PC-9 (cell line): ENCODE measurements at regions of chr4 and their contacts with region 1.

Region 1: DNA sequence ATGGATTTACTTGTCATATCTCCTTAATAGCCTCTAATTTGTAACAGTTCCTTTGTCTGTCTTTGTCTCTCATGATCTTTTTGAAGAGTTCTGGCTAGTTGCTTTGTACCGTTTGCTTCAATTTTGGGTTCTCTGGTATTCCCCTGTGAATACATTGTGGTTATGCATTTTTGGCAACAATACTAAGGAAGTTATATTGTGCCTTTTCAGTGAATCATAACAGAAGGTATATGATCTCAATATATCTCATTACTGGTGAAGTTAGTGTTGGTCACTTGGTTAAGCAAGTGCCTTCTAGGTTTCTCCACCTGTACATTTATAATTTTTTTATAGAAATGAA is 48.6 kb downstream of the DCLK2 start:
- DNase-seq: peak in 1 of 2 experiments; percentile 62
- H3K4me3 ChIP-seq: no peak overlapping the region
- H3K27ac ChIP-seq: peak overlapping the region; percentile 27; the same call in 1 of the 2 replicates
- H3K4me1 ChIP-seq: peaks cover 15% of the 10 kb centered on the region; the same call in 1 of the 2 replicates
- H3K27me3 ChIP-seq: no peaks in the 10 kb centered on the region
- CTCF ChIP-seq: no peak

Region 2: DNA sequence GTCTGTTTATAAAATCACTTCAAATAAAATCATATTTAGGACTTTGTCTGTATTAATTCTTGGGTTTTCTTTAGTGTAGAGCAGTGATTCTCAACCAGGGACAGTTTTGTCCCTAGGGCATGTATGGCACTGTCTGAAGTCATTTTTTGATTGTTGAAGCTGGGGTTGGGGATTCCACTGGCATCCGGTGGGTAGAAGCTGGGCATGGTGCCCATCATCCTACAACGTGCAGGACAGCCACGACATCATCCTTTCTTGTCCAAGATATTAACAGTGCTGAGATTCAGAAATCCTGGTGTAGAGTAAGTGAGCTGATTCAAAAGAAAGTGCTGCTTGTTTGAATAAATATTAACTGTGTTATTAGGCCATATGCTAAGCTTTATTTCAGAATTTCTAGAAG is 19.9 kb before region 1 on chr4:
- CTCF ChIA-PET with region 1: interaction called, 10 read pairs
- POLR2A ChIA-PET with region 1: no interaction called
- intact Hi-C with region 1: no loop called
- DNase-seq: no peak
- H3K4me3 ChIP-seq: no peak overlapping the region
- H3K27ac ChIP-seq: no peak overlapping the region
- H3K4me1 ChIP-seq: no peaks in the 10 kb centered on the region
- H3K27me3 ChIP-seq: no peaks in the 10 kb centered on the region
- CTCF ChIP-seq: no peak

Region 3: GRCh38 chr4:150149381-150149780 is 22.5 kb after region 1 on chr4:
- CTCF ChIA-PET with region 1: no interaction called
- POLR2A ChIA-PET with region 1: no interaction called
- intact Hi-C with region 1: no loop called
- DNase-seq: no peak
- H3K4me3 ChIP-seq: no peak overlapping the region
- H3K27ac ChIP-seq: no peak overlapping the region
- H3K4me1 ChIP-seq: no peaks in the 10 kb centered on the region
- H3K27me3 ChIP-seq: no peaks in the 10 kb centered on the region
- CTCF ChIP-seq: no peak